ENCODE measurements at regions of chr11 and their contacts with region 1.

Region 1: DNA sequence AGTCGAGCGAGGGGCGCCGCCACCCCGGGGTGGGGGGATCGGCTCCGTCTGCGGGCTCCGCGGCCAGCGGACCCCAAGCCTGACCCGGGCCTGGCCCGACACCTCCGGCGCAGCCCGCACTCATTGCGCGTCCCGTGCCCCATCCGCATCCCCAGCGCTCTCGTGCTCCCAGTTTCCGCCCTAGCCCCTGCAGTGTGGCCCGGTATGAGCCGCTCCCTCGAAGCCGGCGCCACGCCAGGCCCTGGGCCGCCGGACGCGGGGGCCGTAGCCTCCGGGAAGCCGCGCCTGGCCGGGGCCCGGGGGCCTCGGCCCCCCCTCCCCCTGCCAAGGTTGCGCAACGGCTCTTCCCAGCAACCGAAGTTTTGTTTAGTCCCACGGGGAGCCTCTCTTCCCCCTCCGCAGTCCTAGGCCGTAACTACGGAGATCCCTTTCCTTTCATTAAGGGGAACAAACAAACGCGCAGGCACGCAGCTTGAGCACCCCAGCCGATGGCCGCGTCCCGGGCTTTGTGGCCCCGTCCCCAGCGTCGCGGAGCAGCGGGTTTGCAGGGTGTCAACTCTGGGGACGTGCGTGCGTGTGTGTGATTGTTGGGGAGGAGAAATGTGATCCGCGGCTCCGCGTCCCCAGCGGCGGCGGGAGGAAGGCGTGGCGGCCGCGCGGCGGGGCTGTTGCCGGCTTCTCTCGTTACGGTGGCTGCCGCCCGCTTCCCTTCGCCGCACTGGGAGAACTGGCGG is 883 bp downstream of the HIPK3 start:
- DNase-seq: peak; percentile 93
- H3K4me3 Mint-ChIP-seq: peak overlapping the region; percentile 89
- H3K27ac Mint-ChIP-seq: peak overlapping the region; percentile 99
- H3K4me1 Mint-ChIP-seq: peaks cover 30% of the 10 kb centered on the region
- H3K27me3 Mint-ChIP-seq: no peaks in the 10 kb centered on the region

Region 2: DNA sequence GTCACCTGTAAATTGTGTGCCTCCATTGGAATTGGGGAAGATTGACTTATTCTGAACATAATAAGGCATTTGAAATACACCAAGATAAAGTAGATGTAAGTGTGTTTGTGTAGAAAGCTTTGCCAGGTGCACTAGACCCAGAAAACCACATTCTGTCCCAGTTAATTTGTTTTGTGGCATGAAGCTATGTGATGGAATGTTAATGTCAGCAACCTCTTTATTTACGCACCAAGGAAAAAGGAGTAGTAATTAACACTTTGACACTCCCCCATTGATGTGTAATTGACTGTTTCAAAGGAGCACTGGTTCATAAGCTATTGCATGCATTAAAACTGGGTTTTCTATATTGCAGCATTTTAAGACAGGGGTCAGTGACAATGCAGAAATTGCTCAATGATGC is 660.1 kb before region 1 on chr11:
- intact Hi-C with region 1: loop called (anchors 5 kb)
- DNase-seq: no peak
- H3K4me3 Mint-ChIP-seq: no peak overlapping the region
- H3K27ac Mint-ChIP-seq: peak overlapping the region; percentile 1
- H3K4me1 Mint-ChIP-seq: peaks cover 13% of the 10 kb centered on the region
- H3K27me3 Mint-ChIP-seq: no peaks in the 10 kb centered on the region

Region 3: GRCh38 chr11:33039274-33040032 is 218.6 kb before region 1 on chr11 and contains the start of gene TCP11L1:
- intact Hi-C with region 1: loop called (anchors 5 kb)
- DNase-seq: peak; percentile 94
- H3K4me3 Mint-ChIP-seq: peak within 1 kb of the TSS; percentile 93
- H3K27ac Mint-ChIP-seq: peak within 1 kb of the TSS; percentile 93
- H3K4me1 Mint-ChIP-seq: peaks cover 21% of the 10 kb centered on the region
- H3K27me3 Mint-ChIP-seq: peaks cover 12% of the 10 kb centered on the region
- total RNA-seq, gene TCP11L1: 12.5 and 14.4 TPM in 2 replicates

Region 4: DNA sequence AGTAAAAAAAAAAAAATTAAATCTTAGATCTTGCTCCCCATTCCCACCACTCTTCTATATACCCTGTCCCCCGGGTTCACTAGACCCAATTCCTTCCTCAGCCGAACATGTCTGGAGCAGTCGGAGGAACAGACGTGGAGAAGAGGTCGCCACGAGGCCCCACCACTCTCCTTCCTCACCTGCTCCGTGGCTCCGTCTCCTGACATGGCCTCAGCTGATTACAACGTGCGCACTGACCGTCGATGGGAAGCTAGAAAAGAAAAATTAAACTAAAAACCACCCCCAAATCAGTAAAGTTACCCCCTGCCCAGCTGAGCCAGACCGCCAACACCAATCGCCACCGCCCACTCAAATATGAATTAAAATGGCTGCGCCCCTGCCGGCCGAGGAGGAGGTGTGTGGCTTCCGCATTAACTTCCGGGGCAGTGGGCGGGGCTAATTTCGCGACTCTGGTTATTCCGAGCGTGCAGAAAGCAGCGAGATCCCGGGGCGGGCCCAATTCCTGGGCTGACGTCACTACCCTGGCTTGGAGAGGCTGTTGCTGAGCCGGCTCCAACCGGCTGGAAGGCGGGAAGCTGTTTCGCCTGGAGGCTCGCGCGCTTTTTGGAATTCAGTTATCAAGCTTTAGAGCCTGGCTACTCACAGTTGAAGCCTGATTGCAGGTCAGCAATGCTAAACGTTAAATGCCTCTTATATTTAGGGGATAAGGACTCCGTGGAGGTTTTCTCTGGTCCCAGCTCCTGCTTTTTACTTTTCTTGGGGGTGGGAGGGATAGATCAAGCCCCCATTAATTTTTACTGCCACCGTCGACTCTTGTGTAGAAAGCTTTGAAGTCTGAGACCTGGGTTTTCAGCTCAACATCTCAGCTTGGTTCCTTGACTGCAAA is 96.7 kb before region 1 on chr11 and contains the start of gene CSTF3:
- intact Hi-C with region 1: loop called (anchors 1 kb)
- DNase-seq: peak; percentile 99
- H3K4me3 Mint-ChIP-seq: peak within 1 kb of the TSS; percentile 98
- H3K27ac Mint-ChIP-seq: peak within 1 kb of the TSS; percentile 100
- H3K4me1 Mint-ChIP-seq: peaks cover 33% of the 10 kb centered on the region
- H3K27me3 Mint-ChIP-seq: no peaks in the 10 kb centered on the region
- total RNA-seq, gene CSTF3: 36.6 and 38.7 TPM in 2 replicates

Region 5: DNA sequence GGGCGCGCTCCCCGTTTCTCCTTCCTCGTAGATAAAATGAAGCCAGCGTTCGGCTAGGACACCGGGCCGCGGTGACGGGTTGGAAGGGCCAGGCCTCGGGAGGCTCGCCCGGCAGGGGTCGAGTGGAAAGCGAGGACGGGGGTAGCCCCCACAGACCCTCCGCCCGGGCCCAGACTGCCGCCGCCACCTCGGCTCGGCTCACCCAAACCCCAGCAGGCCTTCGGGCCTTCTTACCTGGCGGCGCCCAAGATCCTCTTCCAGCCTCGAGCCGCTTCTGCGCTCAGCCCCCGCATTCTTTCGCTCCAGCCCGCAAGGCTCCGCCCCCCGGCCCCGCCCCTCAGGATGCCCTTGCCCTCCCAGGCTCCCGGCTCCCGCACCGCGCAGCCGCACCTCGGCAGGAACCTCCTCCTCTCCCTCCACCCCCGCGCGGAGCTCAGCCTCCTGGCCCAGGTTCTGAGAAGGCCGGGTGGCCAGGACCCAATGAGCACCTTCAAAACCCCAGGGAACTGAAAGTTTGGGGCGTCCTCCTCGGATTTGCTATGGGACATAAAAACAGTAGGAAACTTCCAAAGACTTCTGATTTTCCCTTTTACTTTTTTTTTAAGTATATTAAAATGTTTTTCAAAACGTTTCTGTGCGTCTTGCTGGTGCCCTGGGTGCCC is 478.2 kb after region 1 on chr11 and contains the start of gene CD59:
- intact Hi-C with region 1: loop called (anchors 2 kb)
- DNase-seq: peak; percentile 97
- H3K4me3 Mint-ChIP-seq: peak within 1 kb of the TSS; percentile 90
- H3K27ac Mint-ChIP-seq: peak within 1 kb of the TSS; percentile 89
- H3K4me1 Mint-ChIP-seq: peaks cover 36% of the 10 kb centered on the region
- H3K27me3 Mint-ChIP-seq: peaks cover 8% of the 10 kb centered on the region
- total RNA-seq, gene CD59: 94.1 and 98.7 TPM in 2 replicates

Region 6: GRCh38 chr11:34916015-34916842 is 1658.2 kb after region 1 on chr11 and contains the starts of genes APIP and PDHX:
- intact Hi-C with region 1: loop called (anchors 10 kb)
- DNase-seq: peak; percentile 98
- H3K4me3 Mint-ChIP-seq: peak within 1 kb of the TSS; percentile 98
- H3K27ac Mint-ChIP-seq: peak within 1 kb of the TSS; percentile 95
- H3K4me1 Mint-ChIP-seq: peaks cover 25% of the 10 kb centered on the region
- H3K27me3 Mint-ChIP-seq: no peaks in the 10 kb centered on the region
- total RNA-seq, gene APIP: 26.8 and 29.6 TPM in 2 replicates
- total RNA-seq, gene PDHX: 31.0 and 35.7 TPM in 2 replicates